Natural killer cell (primary cell): ENCODE measurements at regions of chr6 and their contacts with region 1.

Region 1: GRCh38 chr6:28838634-28839442 is 84.9 kb downstream of the TRIM27 start:
- DNase-seq: peak; percentile 74 to 89
- ATAC-seq: peak; percentile 76 to 83 (median 80)
- H3K4me3 ChIP-seq: peak overlapping the region; percentile 58
- H3K4me3 Mint-ChIP-seq: peak overlapping the region; percentile 98
- H3K27ac ChIP-seq: peak overlapping the region; percentile 62
- H3K27ac Mint-ChIP-seq: peak overlapping the region; percentile 93 to 98
- H3K4me1 ChIP-seq: peaks cover 20% of the 10 kb centered on the region
- H3K4me1 Mint-ChIP-seq: peaks cover 22 to 28% of the 10 kb centered on the region in 2 donors
- H3K27me3 ChIP-seq: peaks cover 14% of the 10 kb centered on the region
- H3K27me3 Mint-ChIP-seq: peaks cover 24 to 35% of the 10 kb centered on the region in 2 donors
- CTCF ChIP-seq: peak; percentile 63

Region 2: DNA sequence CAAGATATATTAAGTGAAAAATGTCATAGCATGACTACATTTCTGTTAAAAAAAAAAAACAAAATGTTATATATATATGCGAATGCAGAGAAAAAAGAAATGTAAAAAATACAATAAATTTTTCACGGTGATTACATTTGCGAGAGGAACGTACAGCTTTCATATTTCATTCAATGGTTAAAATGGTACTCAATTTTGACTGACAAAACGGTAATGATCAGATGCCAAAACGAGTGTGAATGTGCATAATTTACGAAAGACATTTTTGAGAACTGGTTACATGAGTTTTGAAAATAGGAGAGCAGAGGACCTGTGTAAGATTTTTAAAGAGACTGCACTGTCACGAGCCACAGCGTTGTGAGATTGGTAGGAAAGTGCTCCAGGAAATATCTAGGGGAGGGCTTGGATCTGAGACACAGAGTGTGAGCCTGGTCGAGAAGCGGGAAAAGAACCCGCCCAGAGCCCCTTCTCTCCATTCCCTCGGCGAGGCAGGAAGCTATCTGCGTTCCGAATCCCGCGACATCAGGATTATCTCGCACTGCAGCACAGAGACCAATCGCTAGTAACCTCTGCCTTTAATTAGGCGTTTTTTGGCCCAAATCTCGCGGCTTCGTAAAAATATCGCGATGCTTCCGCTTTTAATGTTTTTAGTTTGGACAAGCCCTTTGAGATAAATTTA is 56.4 kb after region 1 on chr6:
- intact Hi-C with region 1: loop called (anchors 1 kb)
- DNase-seq: peak; percentile 84 to 96
- ATAC-seq: peak; percentile 66 to 84 (median 74)
- H3K4me3 ChIP-seq: peak overlapping the region; percentile 72
- H3K4me3 Mint-ChIP-seq: peak overlapping the region; percentile 97
- H3K27ac ChIP-seq: peak overlapping the region; percentile 96
- H3K27ac Mint-ChIP-seq: peak overlapping the region; percentile 99
- H3K4me1 ChIP-seq: peaks cover 13% of the 10 kb centered on the region
- H3K4me1 Mint-ChIP-seq: peaks cover 24 to 25% of the 10 kb centered on the region in 2 donors
- H3K27me3 ChIP-seq: no peaks in the 10 kb centered on the region
- H3K27me3 Mint-ChIP-seq: no peaks in the 10 kb centered on the region
- CTCF ChIP-seq: no peak

Region 3: GRCh38 chr6:28940858-28941680 is 102.2 kb after region 1 on chr6:
- intact Hi-C with region 1: loop called (anchors 1 kb)
- DNase-seq: peak; percentile 68 to 90
- ATAC-seq: peak; percentile 65 to 86 (median 78)
- H3K4me3 ChIP-seq: peak overlapping the region; percentile 61
- H3K4me3 Mint-ChIP-seq: peak overlapping the region; percentile 99
- H3K27ac ChIP-seq: peak overlapping the region; percentile 85
- H3K27ac Mint-ChIP-seq: peak overlapping the region; percentile 96 to 98
- H3K4me1 ChIP-seq: peaks cover 35% of the 10 kb centered on the region
- H3K4me1 Mint-ChIP-seq: peaks cover 48 to 51% of the 10 kb centered on the region in 2 donors
- H3K27me3 ChIP-seq: no peaks in the 10 kb centered on the region
- H3K27me3 Mint-ChIP-seq: peaks cover 0 to 7% of the 10 kb centered on the region in 2 donors
- CTCF ChIP-seq: no peak

Region 4: DNA sequence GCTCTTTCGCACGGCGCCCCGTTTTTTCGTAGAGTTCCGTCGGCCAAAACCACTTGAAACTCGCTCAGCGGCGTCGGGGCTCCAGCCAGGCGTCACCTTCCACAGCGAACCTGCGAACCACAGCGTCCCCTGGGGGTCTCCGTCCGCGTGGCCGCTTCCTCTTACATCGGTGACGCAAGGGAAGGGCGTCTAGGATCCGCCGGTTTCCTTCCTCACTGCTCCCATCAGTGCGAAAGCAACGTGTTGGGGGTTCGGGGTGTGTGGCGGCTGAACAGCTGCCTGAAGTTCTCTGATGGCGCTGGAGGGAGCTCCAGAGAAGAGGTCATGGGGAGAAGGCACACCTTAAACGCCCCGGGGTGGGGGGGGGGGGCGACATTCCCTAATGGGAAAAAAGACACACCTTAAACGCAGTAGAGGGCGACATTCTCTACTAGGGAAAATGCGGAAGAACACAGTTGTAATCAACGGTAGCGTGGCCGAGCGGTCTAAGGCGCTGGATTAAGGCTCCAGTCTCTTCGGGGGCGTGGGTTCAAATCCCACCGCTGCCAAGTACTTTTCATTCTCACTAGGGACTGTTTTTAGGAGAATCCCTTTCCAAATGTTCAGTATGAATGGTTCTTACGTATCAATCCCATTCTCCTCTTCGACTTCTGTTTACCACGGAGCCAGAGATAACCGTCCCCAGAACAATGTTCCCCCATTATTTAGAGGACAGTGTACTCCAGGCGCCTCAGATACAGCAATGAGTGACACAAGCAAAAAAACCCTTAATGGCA is 149.9 kb after region 1 on chr6:
- intact Hi-C with region 1: loop called (anchors 1 kb)
- DNase-seq: peak; percentile 55 to 87
- ATAC-seq: peak; percentile 80 to 91 (median 88)
- H3K4me3 ChIP-seq: peak overlapping the region; percentile 5
- H3K4me3 Mint-ChIP-seq: peak overlapping the region; percentile 78
- H3K27ac ChIP-seq: no peak overlapping the region
- H3K27ac Mint-ChIP-seq: peak overlapping the region in 1 of 2 donors; percentile 16
- H3K4me1 ChIP-seq: peaks cover 13% of the 10 kb centered on the region
- H3K4me1 Mint-ChIP-seq: peaks cover 19 to 29% of the 10 kb centered on the region in 2 donors
- H3K27me3 ChIP-seq: peaks cover 15% of the 10 kb centered on the region
- H3K27me3 Mint-ChIP-seq: peaks cover 21 to 22% of the 10 kb centered on the region in 2 donors
- CTCF ChIP-seq: peak; percentile 26

Region 5: GRCh38 chr6:29589423-29590048 is 750.7 kb after region 1 on chr6:
- intact Hi-C with region 1: loop called (anchors 10 kb)
- DNase-seq: peak in 1 of 2 donors; percentile 79
- ATAC-seq: peak; percentile 70 to 85 (median 82)
- H3K4me3 ChIP-seq: no peak overlapping the region
- H3K4me3 Mint-ChIP-seq: no peak overlapping the region
- H3K27ac ChIP-seq: no peak overlapping the region
- H3K27ac Mint-ChIP-seq: no peak overlapping the region
- H3K4me1 ChIP-seq: no peaks in the 10 kb centered on the region
- H3K4me1 Mint-ChIP-seq: no peaks in the 10 kb centered on the region
- H3K27me3 ChIP-seq: no peaks in the 10 kb centered on the region
- H3K27me3 Mint-ChIP-seq: peaks cover 28 to 51% of the 10 kb centered on the region in 2 donors
- CTCF ChIP-seq: peak; percentile 98